ENCODE measurements at regions of chr7 and their contacts with region 1.

Region 1: GRCh38 chr7:23181684-23182553 is at the start of gene NUP42:
- DNase-seq: peak; percentile 98
- H3K4me3 ChIP-seq: peak within 1 kb of the TSS; percentile 69 to 83 (median 74)
- H3K27ac ChIP-seq: peak within 1 kb of the TSS; percentile 90 to 96 (median 94)
- H3K4me1 ChIP-seq: peaks cover 0 to 38% (median 22%) of the 10 kb centered on the region in 4 donors
- H3K27me3 ChIP-seq: no peaks in the 10 kb centered on the region
- CTCF ChIP-seq: no peak
- EP300 ChIP-seq: peak in 1 of 4 donors; percentile 80
- POLR2A ChIP-seq: peak in 1 of 2 donors; percentile 64
- total RNA-seq, gene NUP42: 35.4 to 47.9 (median 37.1) TPM

Region 2: DNA sequence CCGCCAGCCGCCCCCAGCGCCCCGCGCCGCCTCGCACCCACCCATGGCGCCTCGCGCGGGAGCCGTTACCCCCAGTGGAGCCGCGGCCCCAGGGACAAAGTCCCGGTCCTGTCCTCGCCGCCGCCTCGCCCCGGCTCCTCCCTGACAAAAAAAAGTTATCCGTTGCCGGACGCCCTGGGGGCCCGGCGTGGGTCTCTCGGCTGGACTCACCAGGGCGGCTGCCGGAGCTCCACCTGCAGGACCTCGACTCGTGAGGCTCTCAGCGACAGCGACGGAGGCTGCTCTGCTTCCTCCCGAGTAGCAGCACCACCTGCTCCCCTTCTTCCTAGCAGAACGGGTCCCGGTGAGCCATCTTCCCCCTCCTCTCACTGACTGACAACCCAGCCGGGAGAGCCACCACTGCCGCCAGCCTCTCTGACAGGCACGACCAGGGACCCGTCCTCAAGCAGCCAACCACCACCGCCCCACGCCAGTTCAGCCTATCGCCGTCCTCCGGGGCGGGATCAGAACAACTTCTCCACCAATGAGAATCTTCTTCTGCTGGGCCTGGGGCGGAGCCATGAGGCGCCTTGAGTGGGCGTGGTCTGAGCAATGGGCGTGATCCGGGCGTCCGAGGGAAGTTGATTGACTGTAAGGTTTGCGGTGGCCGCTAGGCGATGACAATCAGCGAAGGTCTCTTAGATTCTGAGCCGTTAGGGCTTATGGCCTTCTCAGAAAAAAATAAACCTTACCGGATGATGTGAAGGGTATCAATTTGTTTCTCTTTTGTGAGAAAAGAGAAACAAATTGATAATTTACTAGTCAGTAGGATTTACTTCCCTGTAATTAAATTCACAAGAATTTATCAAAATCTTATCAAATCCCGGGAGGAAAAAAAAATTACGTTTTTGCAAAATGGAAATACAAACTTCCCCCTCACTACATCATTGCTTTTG is 167.9 kb before region 1 on chr7 and contains the start of gene HYCC1:
- intact Hi-C with region 1: loop called (anchors 5 kb)
- DNase-seq: peak; percentile 100
- H3K4me3 ChIP-seq: peak within 1 kb of the TSS; percentile 84 to 88 (median 86)
- H3K27ac ChIP-seq: peak within 1 kb of the TSS; percentile 82 to 90 (median 84)
- H3K4me1 ChIP-seq: peaks cover 0 to 25% (median 17%) of the 10 kb centered on the region in 4 donors
- H3K27me3 ChIP-seq: no peaks in the 10 kb centered on the region
- CTCF ChIP-seq: peak; percentile 47 to 68 (median 62)
- EP300 ChIP-seq: no peak
- POLR2A ChIP-seq: peak; percentile 88 to 92
- total RNA-seq, gene HYCC1: 28.8 to 49.9 (median 35.0) TPM

Region 3: DNA sequence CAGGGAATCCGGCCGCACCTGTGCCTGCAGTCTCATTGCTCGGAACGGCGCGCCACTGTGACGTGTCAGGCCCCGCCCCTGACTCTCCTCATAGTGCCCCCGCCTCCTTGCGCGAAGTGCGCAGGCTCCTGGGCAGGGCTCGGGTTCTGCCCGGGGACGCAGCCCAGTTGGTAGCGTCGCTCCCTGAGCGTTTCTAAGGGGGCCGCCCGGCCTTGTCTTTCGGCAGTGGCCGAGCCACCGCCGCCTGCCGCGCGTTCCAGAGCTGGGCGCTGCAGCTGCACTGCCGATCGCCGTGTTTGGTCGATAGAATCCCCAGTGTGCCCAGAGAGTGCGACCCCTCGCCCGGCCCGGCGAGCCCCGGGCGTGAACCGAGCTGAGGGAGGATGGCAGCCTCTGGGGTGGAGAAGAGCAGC is 76.3 kb before region 1 on chr7 and contains the start of gene KLHL7:
- intact Hi-C with region 1: loop called (anchors 1 kb)
- DNase-seq: peak; percentile 98
- H3K4me3 ChIP-seq: peak within 1 kb of the TSS; percentile 64 to 97 (median 90)
- H3K27ac ChIP-seq: peak within 1 kb of the TSS; percentile 87 to 99 (median 96)
- H3K4me1 ChIP-seq: peaks cover 0 to 37% (median 28%) of the 10 kb centered on the region in 4 donors
- H3K27me3 ChIP-seq: no peaks in the 10 kb centered on the region
- CTCF ChIP-seq: no peak
- EP300 ChIP-seq: no peak
- POLR2A ChIP-seq: peak; percentile 84 to 93
- total RNA-seq, gene KLHL7: 26.9 to 42.5 (median 28.4) TPM

Region 4: DNA sequence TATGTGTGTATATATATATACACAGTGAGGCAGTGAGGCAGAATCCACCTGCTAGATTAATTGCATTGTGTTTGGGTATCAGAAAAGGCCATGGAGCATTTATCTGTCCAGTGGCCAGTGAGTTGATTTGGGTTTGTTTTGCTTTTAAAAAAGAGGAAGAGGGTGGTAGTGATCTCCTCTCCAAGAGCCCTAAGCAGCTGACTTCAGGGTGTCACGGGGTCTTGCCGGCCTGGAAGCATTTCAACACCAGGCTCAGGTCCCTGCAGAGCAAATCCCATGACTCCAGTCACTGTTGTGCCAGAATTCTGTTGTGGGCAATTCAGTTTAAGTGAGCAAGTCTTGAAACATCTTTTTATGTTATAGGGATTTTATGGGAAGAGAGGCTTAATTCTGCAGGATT is 34.1 kb after region 1 on chr7:
- intact Hi-C with region 1: no loop called
- DNase-seq: peak; percentile 73
- H3K4me3 ChIP-seq: no peak overlapping the region
- H3K27ac ChIP-seq: no peak overlapping the region
- H3K4me1 ChIP-seq: no peaks in the 10 kb centered on the region
- H3K27me3 ChIP-seq: no peaks in the 10 kb centered on the region
- CTCF ChIP-seq: no peak
- EP300 ChIP-seq: no peak
- POLR2A ChIP-seq: no peak

Region 5: DNA sequence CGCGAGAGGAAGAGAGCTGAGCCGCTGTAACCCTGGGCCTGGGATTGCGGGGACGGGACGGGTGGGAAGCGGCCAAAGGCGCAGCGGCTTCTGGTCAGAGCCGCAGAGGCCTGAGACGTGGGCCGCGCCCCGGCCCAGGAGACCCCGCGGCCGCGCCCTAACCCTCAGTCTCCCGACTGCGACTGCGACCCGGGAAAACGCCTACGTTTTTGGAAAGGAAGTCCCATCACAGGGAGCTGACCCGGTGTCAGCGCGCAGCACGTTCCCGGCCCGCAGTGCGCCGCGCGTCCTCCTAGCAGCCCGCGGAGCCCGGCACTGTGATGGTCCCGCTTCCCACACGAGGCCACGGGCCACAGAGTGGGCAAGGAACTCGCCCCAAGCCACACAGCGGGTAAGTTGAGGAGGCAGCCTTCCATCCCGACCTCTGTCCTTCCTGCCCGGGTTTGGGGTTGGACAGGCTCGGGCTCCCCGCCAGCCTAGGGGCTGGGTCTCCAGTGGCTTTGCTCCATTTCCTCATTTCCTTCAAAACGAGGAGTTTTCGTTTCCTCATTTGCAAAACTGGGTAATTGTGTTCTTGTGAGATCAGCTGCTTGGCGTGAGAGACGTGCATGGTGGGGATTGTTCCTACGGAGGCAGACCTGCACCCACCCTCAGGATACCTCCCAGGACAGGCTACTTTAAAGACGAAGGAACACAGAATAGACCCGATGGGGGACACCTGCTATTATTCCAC is 65.8 kb after region 1 on chr7:
- intact Hi-C with region 1: loop called (anchors 5 kb)
- DNase-seq: peak; percentile 68
- H3K4me3 ChIP-seq: peak overlapping the region; percentile 26 to 53 (median 46)
- H3K27ac ChIP-seq: peak overlapping the region; percentile 72 to 75 (median 74)
- H3K4me1 ChIP-seq: peaks cover 0 to 18% (median 4%) of the 10 kb centered on the region in 4 donors
- H3K27me3 ChIP-seq: peaks cover 0 to 32% (median 20%) of the 10 kb centered on the region in 3 donors
- CTCF ChIP-seq: no peak
- EP300 ChIP-seq: no peak
- POLR2A ChIP-seq: no peak

Region 6: GRCh38 chr7:23298885-23299769 is 117.2 kb after region 1 on chr7 and contains the start of gene MALSU1:
- intact Hi-C with region 1: loop called (anchors 2 kb)
- DNase-seq: peak; percentile 98
- H3K4me3 ChIP-seq: peak within 1 kb of the TSS; percentile 91 to 94 (median 92)
- H3K27ac ChIP-seq: peak within 1 kb of the TSS; percentile 81 to 90 (median 88)
- H3K4me1 ChIP-seq: peaks cover 0 to 50% (median 40%) of the 10 kb centered on the region in 4 donors
- H3K27me3 ChIP-seq: no peaks in the 10 kb centered on the region
- CTCF ChIP-seq: no peak
- EP300 ChIP-seq: peak in 1 of 4 donors; percentile 45
- POLR2A ChIP-seq: peak; percentile 79 to 83
- total RNA-seq, gene MALSU1: 38.5 to 94.0 (median 71.1) TPM

Region 7: DNA sequence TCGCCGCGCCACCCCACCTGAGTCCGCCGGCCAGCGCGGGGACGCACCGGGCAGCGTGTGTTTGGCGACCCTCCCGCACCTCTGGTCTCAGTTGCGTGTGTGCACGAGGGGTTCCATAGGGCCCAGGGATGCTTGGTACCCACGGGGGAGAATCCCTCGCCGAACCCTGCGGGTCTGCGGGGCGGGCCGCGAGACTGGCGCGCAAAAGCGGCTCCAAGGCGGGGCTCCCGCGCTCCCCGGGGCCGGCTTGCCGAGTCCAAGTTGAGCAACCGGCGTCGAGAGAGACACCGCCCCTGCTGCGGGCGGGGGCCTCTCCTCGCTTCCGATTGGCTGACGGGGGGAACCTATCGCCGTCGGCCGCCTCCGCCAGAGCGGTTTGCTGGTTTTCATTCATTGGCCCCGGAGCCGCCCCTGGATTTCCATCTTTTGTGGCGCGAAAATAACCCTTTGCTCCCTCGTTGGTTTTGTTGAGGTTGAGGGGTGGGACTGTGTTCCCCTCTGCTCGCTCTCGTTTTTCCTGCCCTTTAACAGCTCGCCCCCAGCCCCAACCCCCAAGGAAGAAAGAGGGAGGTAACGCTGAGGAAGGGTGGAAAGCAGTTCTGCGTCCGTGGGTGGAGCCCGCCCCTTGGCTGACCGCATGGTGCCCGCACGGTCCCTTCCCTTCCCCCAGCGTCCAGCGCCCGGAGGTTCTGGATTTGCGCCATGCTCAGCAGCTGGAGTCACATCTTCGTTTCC is 292.3 kb after region 1 on chr7:
- intact Hi-C with region 1: loop called (anchors 5 kb)
- DNase-seq: peak; percentile 81
- H3K4me3 ChIP-seq: peak overlapping the region in 3 of 4 donors; percentile 6 to 21 (median 20)
- H3K27ac ChIP-seq: no peak overlapping the region
- H3K4me1 ChIP-seq: peaks cover 0 to 37% (median 36%) of the 10 kb centered on the region in 4 donors
- H3K27me3 ChIP-seq: peaks cover 74 to 100% (median 99%) of the 10 kb centered on the region in 3 donors
- CTCF ChIP-seq: no peak
- EP300 ChIP-seq: no peak
- POLR2A ChIP-seq: no peak

Region 8: GRCh38 chr7:23531794-23532489 is 350.0 kb after region 1 on chr7 and contains the start of gene TRA2A:
- intact Hi-C with region 1: loop called (anchors 5 kb)
- DNase-seq: peak; percentile 99
- H3K4me3 ChIP-seq: peak within 1 kb of the TSS; percentile 72 to 82 (median 74)
- H3K27ac ChIP-seq: peak within 1 kb of the TSS; percentile 92 to 97 (median 94)
- H3K4me1 ChIP-seq: peaks cover 0 to 35% (median 33%) of the 10 kb centered on the region in 4 donors
- H3K27me3 ChIP-seq: no peaks in the 10 kb centered on the region
- CTCF ChIP-seq: no peak
- EP300 ChIP-seq: no peak
- POLR2A ChIP-seq: peak; percentile 88 to 89
- total RNA-seq, gene TRA2A: 37.0 to 84.5 (median 42.2) TPM